ENCODE measurements at regions of chrX and their contacts with region 1.

Region 1: DNA sequence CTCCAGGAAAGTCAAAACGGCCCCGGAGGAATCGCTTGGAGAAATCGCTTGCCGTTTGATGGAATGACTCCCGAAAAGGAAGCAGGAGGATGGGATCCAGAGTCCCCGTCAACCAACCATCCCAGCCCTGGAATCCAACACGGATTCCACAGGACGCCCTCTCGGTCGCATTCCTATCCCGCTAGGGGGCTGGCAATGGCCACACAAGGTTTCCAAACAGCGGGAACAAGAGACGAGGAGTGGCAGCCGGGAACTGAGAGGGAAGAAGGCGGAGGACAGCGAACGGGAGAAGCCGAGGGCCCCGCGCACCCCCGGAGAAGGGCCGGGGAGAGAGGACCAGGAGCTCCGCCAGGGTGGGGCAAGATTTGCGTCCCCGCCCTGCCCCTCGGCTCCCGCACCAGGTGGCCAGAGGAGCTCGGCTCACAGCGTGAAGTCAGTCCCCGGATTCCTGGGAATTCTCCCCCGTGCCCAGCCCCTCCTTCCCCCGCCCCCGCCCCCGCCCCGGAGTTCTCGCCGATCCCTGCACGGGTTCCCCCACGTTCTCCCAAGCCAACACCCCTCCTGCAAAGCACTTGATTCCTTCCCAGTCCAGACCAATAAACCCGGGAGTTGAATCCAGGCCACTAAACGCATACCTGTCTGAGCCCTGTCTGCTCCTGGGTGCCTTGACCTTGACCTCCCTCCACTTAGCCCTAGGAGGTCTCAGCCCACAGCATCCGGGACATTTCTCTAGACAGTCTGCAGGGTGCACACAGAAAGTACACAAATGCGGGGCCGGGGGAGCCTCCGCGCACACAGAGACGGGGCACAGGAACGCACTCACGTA is 1.4 kb downstream of the PDZD4 start:
- DNase-seq: no peak
- ATAC-seq: peak in 2 of 4 donors; percentile 11 to 40
- H3K4me3 ChIP-seq: peak overlapping the region; percentile 19 to 59 (median 49)
- H3K27ac ChIP-seq: peak overlapping the region in 3 of 12 donors; percentile 9 to 68 (median 56)
- H3K4me1 ChIP-seq: peaks cover 0 to 23% (median 0%) of the 10 kb centered on the region in 12 donors
- H3K27me3 ChIP-seq: peaks cover 0 to 81% (median 0%) of the 10 kb centered on the region in 9 donors
- CTCF ChIP-seq: peak in 1 of 12 donors; percentile 22
- POLR2A ChIP-seq: no peak

Region 2: DNA sequence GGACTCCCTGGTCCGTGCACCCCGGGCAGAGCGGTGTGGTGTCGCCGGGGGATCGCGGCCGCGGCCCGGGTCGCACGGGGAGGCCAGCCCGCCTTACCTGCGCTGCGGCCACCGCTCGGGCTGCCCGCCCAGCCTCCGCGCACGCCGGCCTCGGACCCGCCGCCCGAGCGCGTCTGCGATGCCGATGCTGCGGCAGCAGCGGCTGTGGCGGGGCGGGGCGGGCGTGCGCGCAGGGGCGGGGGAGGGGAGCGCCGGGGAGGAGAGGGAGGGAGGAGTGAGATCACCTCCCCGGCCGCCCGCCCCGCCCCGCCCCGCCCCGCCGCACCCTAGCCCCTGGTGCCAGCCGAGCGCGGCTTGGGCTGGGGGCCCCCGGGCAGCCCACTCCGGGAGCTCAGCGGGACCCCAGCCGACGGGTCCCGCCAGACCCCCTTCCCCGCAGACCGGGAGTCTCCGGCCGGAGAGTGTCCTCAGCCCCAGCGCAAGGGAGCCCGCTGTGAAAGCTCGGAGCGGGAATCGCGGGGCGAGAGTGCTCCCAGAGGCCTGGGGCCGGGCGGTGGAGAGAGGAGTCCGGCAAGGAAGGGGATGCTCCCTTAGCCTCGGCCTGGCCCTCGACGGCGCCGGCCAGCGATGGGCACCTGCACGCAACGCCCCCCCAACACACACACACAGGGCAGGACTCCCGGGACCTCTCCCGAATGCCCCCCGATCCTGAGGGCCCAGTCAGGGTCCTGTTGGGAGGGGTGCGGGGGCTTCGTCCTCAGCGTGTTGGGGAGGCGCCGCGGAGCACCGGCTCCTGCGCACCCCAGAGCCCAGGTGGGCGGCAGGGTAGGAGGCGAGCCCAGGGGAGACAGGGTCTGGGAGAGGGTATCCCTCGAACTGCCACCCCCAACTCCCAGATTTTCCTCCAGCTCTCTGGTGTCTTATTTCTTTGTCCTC is 57.3 kb after region 1 on chrX and contains the start of gene L1CAM:
- intact Hi-C with region 1: loop called in 1 of 10 experiments (anchors 5 kb)
- DNase-seq: peak in 2 of 5 donors; percentile 15 to 21
- ATAC-seq: no peak
- H3K4me3 ChIP-seq: peak within 1 kb of the TSS in 7 of 12 donors; percentile 15 to 38 (median 21)
- H3K27ac ChIP-seq: no peak within 1 kb of the TSS
- H3K4me1 ChIP-seq: peaks cover 0 to 20% (median 0%) of the 10 kb centered on the region in 12 donors
- H3K27me3 ChIP-seq: peaks cover 0 to 94% (median 23%) of the 10 kb centered on the region in 9 donors
- CTCF ChIP-seq: no peak
- POLR2A ChIP-seq: no peak
- total RNA-seq, gene L1CAM: 0.99 to 11.0 (median 3.1) TPM

Region 3: GRCh38 chrX:153900831-153901752 is 72.2 kb after region 1 on chrX:
- intact Hi-C with region 1: loop called in 3 of 10 experiments (anchors 5 to 10 kb)
- DNase-seq: peak in 4 of 5 donors; percentile 54 to 74 (median 60)
- ATAC-seq: peak in 3 of 4 donors; percentile 53 to 64 (median 56)
- H3K4me3 ChIP-seq: no peak overlapping the region
- H3K27ac ChIP-seq: peak overlapping the region in 4 of 12 donors; percentile 11 to 64 (median 18)
- H3K4me1 ChIP-seq: peaks cover 0 to 32% (median 6%) of the 10 kb centered on the region in 12 donors
- H3K27me3 ChIP-seq: peaks cover 0 to 20% (median 0%) of the 10 kb centered on the region in 9 donors
- CTCF ChIP-seq: no peak
- POLR2A ChIP-seq: no peak